PC-9 (cell line): ENCODE measurements at regions of chr3 and their contacts with region 1.

Region 1: DNA sequence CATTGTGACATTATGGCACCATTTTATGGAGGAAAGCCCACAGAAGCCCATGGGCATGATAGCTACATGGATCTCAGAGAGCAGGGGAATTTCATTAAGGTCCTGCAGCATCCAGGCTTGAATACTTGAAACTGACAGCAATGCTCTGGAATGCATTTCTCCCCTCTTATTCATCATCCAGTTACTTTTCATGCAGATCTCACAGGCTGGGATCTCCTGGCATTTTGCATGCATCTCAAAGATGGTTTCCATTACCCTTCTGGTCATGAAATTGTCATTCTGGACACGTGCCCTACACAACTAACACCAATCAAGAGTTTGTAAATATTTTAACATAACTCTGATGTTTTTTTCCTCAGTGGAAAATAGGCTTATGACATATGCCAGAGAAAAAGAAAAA is 32.4 kb downstream of the VGLL3 start:
- DNase-seq: no peak
- H3K4me3 ChIP-seq: no peak overlapping the region
- H3K27ac ChIP-seq: no peak overlapping the region
- H3K4me1 ChIP-seq: peaks cover 13% of the 10 kb centered on the region; the same call in 1 of the 2 replicates
- H3K27me3 ChIP-seq: no peaks in the 10 kb centered on the region
- CTCF ChIP-seq: no peak

Region 2: DNA sequence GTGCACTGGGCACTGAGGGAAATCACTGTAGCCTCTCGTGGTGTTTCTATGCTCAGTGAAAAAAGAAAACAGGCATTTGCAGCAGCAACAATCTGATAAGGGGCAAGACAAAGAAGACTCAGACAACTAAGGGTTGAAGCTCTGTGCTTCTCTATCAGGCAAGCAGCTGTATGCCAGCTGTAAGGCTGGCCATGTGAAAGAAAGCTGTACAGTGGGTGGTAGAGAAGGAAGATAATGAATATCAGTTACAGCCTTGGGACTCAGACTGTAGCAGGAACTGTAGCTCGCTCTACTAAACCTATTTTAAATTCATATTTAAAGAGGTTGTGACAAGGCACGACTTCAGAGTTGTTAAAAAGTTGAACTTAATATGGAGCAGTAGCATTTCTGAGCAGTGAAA is 43.9 kb before region 1 on chr3:
- CTCF ChIA-PET with region 1: no interaction called
- POLR2A ChIA-PET with region 1: interaction called, 16 read pairs
- intact Hi-C with region 1: no loop called
- DNase-seq: no peak
- H3K4me3 ChIP-seq: no peak overlapping the region
- H3K27ac ChIP-seq: no peak overlapping the region
- H3K4me1 ChIP-seq: no peaks in the 10 kb centered on the region
- H3K27me3 ChIP-seq: no peaks in the 10 kb centered on the region
- CTCF ChIP-seq: no peak

Region 3: GRCh38 chr3:86923071-86923491 is 35.5 kb before region 1 on chr3:
- CTCF ChIA-PET with region 1: no interaction called
- POLR2A ChIA-PET with region 1: no interaction called
- intact Hi-C with region 1: loop called (anchors 5 kb)
- DNase-seq: peak; percentile 51 to 72
- H3K4me3 ChIP-seq: no peak overlapping the region
- H3K27ac ChIP-seq: no peak overlapping the region; the same call in 1 of the 2 replicates
- H3K4me1 ChIP-seq: peaks cover 14% of the 10 kb centered on the region; the same call in 1 of the 2 replicates
- H3K27me3 ChIP-seq: no peaks in the 10 kb centered on the region
- CTCF ChIP-seq: no peak

Region 4: DNA sequence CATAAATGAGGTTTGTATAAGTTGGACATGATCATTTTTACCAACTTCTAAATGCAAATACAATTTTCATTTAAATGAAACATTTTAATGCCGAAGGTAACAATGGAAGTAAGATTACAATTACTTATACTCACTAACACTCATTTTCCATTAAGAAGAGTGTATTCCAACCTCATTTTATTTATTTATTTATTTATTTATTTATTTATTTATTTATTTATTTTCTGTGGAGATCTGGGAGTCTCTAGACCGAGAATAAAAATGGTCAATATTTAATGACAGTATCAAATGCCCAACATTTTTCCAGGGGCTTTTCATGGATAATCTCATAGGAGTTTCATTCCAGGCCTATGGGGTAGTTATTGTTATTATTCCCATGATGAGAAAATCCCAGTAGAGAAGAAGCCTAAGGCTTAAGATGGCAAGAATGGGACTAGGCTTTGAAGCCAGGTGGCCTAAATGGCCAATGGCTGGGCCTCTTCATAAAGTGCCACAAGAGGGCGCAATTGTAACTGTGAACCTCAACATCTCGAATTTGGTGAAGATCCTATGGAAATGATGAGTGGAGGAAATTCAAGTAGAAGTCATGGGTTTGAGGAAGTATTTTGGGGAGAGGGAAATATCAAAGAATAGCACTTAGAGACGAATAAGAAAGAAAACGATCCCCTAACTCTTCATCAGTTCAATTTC is 11.1 kb after region 1 on chr3:
- CTCF ChIA-PET with region 1: interaction called, 5 read pairs
- POLR2A ChIA-PET with region 1: interaction called, 21 read pairs
- intact Hi-C with region 1: no loop called
- DNase-seq: no peak
- H3K4me3 ChIP-seq: no peak overlapping the region
- H3K27ac ChIP-seq: no peak overlapping the region
- H3K4me1 ChIP-seq: peaks cover 12% of the 10 kb centered on the region; the same call in 1 of the 2 replicates
- H3K27me3 ChIP-seq: no peaks in the 10 kb centered on the region
- CTCF ChIP-seq: peak; percentile 84

Region 5: DNA sequence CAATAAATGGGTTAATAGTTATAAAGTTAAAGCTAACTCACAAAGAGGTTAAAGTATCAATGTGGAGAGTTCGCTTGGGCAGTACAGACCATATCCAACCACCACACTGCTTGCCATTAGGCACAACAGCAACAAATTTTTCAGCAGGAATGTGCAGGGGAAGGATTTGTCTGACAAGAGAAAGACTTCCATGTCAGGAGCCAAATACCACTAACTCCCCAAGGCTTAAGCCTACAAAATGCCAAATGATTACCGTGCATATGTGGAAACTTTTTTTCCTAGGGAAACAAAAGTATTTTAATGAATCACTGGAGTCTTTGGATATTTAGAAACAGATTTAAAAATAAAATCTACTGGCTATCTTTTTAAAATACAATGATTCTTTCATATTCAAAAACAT is 24.3 kb after region 1 on chr3:
- CTCF ChIA-PET with region 1: no interaction called
- POLR2A ChIA-PET with region 1: no interaction called
- intact Hi-C with region 1: no loop called
- DNase-seq: no peak
- H3K4me3 ChIP-seq: no peak overlapping the region
- H3K27ac ChIP-seq: no peak overlapping the region
- H3K4me1 ChIP-seq: no peaks in the 10 kb centered on the region
- H3K27me3 ChIP-seq: no peaks in the 10 kb centered on the region
- CTCF ChIP-seq: no peak

Region 6: GRCh38 chr3:87025661-87026635 is 67.4 kb after region 1 on chr3:
- CTCF ChIA-PET with region 1: no interaction called
- POLR2A ChIA-PET with region 1: no interaction called
- intact Hi-C with region 1: no loop called
- DNase-seq: peak; percentile 46 to 79
- H3K4me3 ChIP-seq: no peak overlapping the region
- H3K27ac ChIP-seq: no peak overlapping the region
- H3K4me1 ChIP-seq: peaks cover 17% of the 10 kb centered on the region
- H3K27me3 ChIP-seq: no peaks in the 10 kb centered on the region
- CTCF ChIP-seq: no peak